Ascending aorta (tissue), 2 donors: ENCODE measurements at regions of chr5 and their contacts with region 1.

Region 1: DNA sequence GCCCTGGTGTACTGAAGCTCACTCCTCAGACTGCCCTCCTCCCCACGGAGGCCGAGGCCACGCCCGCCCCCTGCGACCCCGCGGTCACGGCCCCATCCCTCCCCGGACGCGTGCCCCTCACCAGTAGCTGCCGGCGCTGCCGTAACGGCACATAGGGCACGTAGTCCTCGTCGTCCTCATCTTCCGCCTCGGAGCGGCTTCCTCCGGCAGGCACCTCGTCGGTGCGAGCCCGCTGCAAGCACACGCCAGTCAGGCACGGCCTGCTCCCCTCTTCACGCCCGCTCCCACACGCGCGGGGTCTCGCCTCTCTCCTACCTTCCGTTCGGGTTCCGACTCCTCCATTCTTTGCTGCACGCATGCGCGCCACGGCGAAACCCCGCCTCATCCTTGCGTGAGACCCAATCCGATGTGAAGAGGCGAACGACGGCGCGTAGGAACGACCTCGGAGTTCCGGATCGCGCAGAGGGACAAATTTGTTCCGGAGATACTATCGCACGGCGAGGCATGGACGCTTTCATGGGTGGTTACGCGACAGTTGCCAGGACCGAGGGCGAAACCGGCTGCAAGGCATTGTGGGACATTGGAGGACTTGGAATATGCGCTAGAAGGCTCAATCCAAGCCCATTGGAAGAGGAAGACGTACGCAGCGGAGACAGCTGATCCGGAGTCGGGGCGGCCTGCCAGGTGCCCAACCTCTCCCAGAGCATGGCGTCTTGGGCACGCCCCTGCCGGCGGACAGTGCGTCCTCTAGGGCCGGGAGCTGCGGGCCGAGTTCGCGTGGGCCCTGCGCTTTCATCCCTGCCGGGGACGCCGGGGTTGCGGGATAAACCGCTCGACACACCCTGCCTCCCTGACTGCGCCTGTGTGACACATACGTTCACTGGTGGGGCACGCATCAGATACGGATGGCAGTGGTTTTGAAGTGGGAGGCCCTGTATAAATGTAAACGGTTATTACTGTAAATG is at the start of gene DDX41:
- DNase-seq: peak; percentile 90 to 99
- H3K4me3 ChIP-seq: peak within 1 kb of the TSS; percentile 88 to 97
- H3K27ac ChIP-seq: peak within 1 kb of the TSS; percentile 73 to 82
- H3K4me1 ChIP-seq: peaks cover 4 to 10% of the 10 kb centered on the region in 2 donors
- H3K27me3 ChIP-seq: no peaks in the 10 kb centered on the region
- CTCF ChIP-seq: peak in 1 of 3 experiments; percentile 17
- total RNA-seq, gene DDX41: 117 TPM

Region 2: GRCh38 chr5:177311723-177312648 is 204.9 kb before region 1 on chr5 and contains the start of gene MXD3:
- intact Hi-C with region 1: loop called (anchors 5 kb)
- DNase-seq: peak; percentile 88 to 98
- H3K4me3 ChIP-seq: peak within 1 kb of the TSS; percentile 57 to 66
- H3K27ac ChIP-seq: no peak within 1 kb of the TSS
- H3K4me1 ChIP-seq: peaks cover 12 to 18% of the 10 kb centered on the region in 2 donors
- H3K27me3 ChIP-seq: no peaks in the 10 kb centered on the region
- CTCF ChIP-seq: no peak
- total RNA-seq, gene MXD3: 13.5 TPM

Region 3: DNA sequence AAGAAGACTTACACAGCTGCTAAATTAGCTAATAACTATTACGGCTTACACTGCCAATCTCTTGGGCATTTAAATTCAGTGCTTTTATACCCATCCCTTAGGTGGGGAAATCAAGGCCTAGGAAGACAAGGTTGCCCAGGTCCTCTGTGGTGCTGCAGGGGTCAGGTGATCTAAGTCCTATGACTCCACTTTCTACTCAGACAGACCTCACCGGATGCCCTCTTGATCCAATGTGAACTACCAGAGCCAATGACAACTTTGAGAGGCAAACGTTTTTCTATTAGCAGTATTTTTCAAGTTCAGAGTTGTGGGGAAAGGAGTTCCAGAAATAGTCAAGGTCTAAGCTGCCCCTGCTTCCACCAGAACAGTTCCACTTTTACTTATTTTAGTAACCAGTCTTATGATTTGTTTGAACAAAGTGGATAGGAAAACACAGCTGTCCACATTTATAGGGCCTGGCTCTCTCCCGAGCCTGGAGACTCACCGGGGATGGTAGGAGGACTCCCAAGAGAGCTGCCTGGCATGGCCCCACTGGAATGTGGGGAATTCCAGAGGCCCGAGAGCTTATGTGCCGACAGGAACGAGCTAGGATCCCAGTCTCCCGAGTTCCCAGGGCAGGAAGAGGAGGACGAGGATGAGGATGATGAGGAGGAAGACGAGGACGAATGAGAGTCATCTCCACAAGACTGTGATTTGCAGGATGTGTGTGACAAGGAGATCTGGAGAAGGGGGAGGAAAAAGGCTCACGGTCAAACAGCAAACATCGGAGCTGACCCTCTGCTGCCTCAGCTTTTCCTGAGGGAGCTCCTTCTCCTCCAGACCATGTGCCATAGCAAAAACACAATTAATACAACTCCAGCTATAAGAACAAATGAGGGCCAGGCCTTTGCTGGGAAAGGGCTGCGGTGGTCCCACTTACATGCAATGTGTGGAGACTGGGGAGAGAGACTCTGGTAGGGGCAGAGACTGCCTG is 20.8 kb after region 1 on chr5:
- intact Hi-C with region 1: loop called (anchors 2 kb)
- DNase-seq: peak in 1 of 2 donors; percentile 90
- H3K4me3 ChIP-seq: peak overlapping the region in 1 of 2 donors; percentile 29
- H3K27ac ChIP-seq: peak overlapping the region; percentile 81 to 82
- H3K4me1 ChIP-seq: peaks cover 32 to 54% of the 10 kb centered on the region in 2 donors
- H3K27me3 ChIP-seq: no peaks in the 10 kb centered on the region
- CTCF ChIP-seq: no peak

Region 4: DNA sequence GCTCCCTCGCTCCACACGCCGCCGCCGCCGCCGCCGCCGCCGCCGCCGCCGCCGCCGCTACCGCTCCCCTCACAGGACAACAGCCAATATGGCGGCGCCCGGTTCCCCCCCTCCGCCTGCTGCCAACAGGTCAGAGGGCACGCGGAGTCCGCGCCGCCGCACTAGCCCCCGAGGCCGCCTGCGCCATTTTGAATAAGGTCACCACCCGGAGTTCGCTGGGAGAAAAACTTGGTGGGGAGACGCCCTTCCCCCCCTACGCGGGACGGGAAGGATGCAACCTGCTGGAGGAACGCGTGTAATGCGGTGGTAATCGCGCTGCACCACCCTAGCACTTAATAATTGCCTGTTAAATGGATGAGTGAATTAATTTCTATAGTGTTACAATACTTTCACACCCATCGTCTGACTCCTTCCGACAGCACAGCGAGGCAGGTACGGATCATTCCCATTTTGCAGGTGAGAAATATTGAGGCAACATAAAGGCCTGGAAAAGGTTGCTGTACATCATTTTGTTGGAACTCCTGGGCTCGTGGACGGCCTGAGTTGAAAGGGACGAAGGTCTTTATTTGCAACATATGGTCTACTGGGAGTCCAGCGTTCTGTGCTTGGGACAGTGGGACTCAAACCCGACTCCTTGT is 37.7 kb after region 1 on chr5 and contains the start of gene FAM193B:
- intact Hi-C with region 1: loop called (anchors 2 kb)
- DNase-seq: peak; percentile 76 to 97
- H3K4me3 ChIP-seq: peak within 1 kb of the TSS; percentile 81 to 87
- H3K27ac ChIP-seq: peak within 1 kb of the TSS; percentile 77 to 81
- H3K4me1 ChIP-seq: peaks cover 8 to 30% of the 10 kb centered on the region in 2 donors
- H3K27me3 ChIP-seq: no peaks in the 10 kb centered on the region
- CTCF ChIP-seq: peak in 1 of 3 experiments; percentile 16
- total RNA-seq, gene FAM193B: 116 TPM

Region 5: GRCh38 chr5:177592010-177592834 is 75.3 kb after region 1 on chr5 and contains the start of gene TMED9:
- intact Hi-C with region 1: loop called (anchors 10 kb)
- DNase-seq: peak; percentile 43 to 93
- H3K4me3 ChIP-seq: peak within 1 kb of the TSS; percentile 79 to 87
- H3K27ac ChIP-seq: peak within 1 kb of the TSS; percentile 70 to 87
- H3K4me1 ChIP-seq: peaks cover 7 to 15% of the 10 kb centered on the region in 2 donors
- H3K27me3 ChIP-seq: no peaks in the 10 kb centered on the region
- CTCF ChIP-seq: no peak
- total RNA-seq, gene TMED9: 113 TPM